Mammary epithelial cell (primary cell): ENCODE measurements at regions of chr11 and their contacts with region 1.

Region 1: GRCh38 chr11:116499396-116500003 is 273.3 kb downstream of the BUD13 start:
- DNase-seq: peak; percentile 33
- H3K4me3 ChIP-seq: no peak overlapping the region
- H3K27ac ChIP-seq: no peak overlapping the region
- H3K4me1 ChIP-seq: no peaks in the 10 kb centered on the region
- H3K27me3 ChIP-seq: peaks cover 10% of the 10 kb centered on the region
- CTCF ChIP-seq: peak; percentile 44 to 62

Region 2: GRCh38 chr11:116217006-116217405 is 282.5 kb before region 1 on chr11:
- CTCF ChIA-PET with region 1: no interaction called
- dilution Hi-C with region 1: no loop called
- in situ Hi-C with region 1: no loop called
- intact Hi-C with region 1: loop called (anchors 2 kb)
- DNase-seq: peak; percentile 8
- H3K4me3 ChIP-seq: no peak overlapping the region
- H3K27ac ChIP-seq: no peak overlapping the region
- H3K4me1 ChIP-seq: no peaks in the 10 kb centered on the region
- H3K27me3 ChIP-seq: peaks cover 3% of the 10 kb centered on the region
- CTCF ChIP-seq: peak; percentile 88 to 89

Region 3: GRCh38 chr11:116750070-116750718 is 250.7 kb after region 1 on chr11:
- CTCF ChIA-PET with region 1: no interaction called
- dilution Hi-C with region 1: no loop called
- in situ Hi-C with region 1: no loop called
- intact Hi-C with region 1: no loop called
- DNase-seq: no peak
- H3K4me3 ChIP-seq: no peak overlapping the region
- H3K27ac ChIP-seq: no peak overlapping the region
- H3K4me1 ChIP-seq: no peaks in the 10 kb centered on the region
- H3K27me3 ChIP-seq: no peaks in the 10 kb centered on the region
- CTCF ChIP-seq: no peak

Region 4: DNA sequence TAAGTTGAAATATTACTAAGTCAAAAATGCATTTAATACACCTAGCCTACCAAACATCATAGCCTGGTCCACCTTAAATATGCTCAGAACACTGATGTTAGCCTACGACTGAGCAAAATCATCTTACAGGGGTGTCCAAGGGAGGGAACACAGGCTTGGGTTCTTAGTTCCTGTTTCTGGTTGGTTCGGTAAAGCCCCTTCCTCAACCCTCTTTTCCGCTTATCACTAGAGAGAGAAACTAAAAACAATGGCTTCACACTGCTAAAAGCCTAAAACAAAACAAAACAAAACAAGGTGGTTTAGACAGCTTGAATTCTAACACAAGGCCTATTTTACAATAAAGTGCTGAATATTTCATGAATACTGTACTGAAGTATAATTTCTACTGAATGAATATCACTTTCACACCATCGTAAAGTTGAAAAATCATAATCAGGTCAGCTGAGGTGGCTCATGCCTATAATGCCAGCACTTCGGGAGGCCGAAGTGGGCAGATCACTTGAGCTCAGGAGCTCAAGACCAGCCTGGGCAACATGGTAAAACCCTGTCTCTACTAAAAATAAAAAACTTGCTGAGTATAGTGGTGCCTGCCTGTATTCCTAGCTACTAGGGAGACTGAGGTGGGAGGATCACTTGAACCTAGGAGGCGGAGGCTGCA is 480.8 kb after region 1 on chr11:
- CTCF ChIA-PET with region 1: no interaction called
- dilution Hi-C with region 1: no loop called
- in situ Hi-C with region 1: no loop called
- intact Hi-C with region 1: no loop called
- DNase-seq: no peak
- H3K4me3 ChIP-seq: no peak overlapping the region
- H3K27ac ChIP-seq: no peak overlapping the region
- H3K4me1 ChIP-seq: peaks cover 26% of the 10 kb centered on the region
- H3K27me3 ChIP-seq: no peaks in the 10 kb centered on the region
- CTCF ChIP-seq: no peak